CD14-positive monocyte (primary cell): ENCODE measurements at regions of chr21 and their contacts with region 1.

Region 1: GRCh38 chr21:32994305-32994704 is 31.4 kb upstream of the OLIG2 start:
- DNase-seq: peak; percentile 27 to 60 (median 52)
- H3K4me3 ChIP-seq: no peak overlapping the region
- H3K4me3 Mint-ChIP-seq: no peak overlapping the region
- H3K27ac ChIP-seq: no peak overlapping the region
- H3K27ac Mint-ChIP-seq: peak overlapping the region in 1 of 7 donors; percentile 33
- H3K4me1 ChIP-seq: no peaks in the 10 kb centered on the region
- H3K4me1 Mint-ChIP-seq: peaks cover 6% of the 10 kb centered on the region
- H3K27me3 ChIP-seq: peaks cover 7 to 24% of the 10 kb centered on the region in 2 donors
- H3K27me3 Mint-ChIP-seq: peaks cover 22 to 30% (median 24%) of the 10 kb centered on the region in 3 donors
- CTCF ChIP-seq: peak; percentile 78

Region 2: GRCh38 chr21:33019885-33020557 is 25.7 kb after region 1 on chr21:
- intact Hi-C with region 1: loop called in 1 of 2 experiments (anchors 2 kb)
- DNase-seq: peak in 1 of 3 donors; percentile 42
- H3K4me3 ChIP-seq: peak overlapping the region; percentile 0 to 69 (median 21)
- H3K4me3 Mint-ChIP-seq: peak overlapping the region; percentile 77 to 86
- H3K27ac ChIP-seq: no peak overlapping the region
- H3K27ac Mint-ChIP-seq: peak overlapping the region in 4 of 7 donors; percentile 55 to 68 (median 61)
- H3K4me1 ChIP-seq: peaks cover 59 to 76% of the 10 kb centered on the region in 2 donors
- H3K4me1 Mint-ChIP-seq: peaks cover 79% of the 10 kb centered on the region
- H3K27me3 ChIP-seq: peaks cover 47 to 79% of the 10 kb centered on the region in 2 donors
- H3K27me3 Mint-ChIP-seq: peaks cover 71 to 83% (median 78%) of the 10 kb centered on the region in 3 donors
- CTCF ChIP-seq: no peak